Activated T-helper 2 cell treated with anti-CD3 and anti-CD28 coated beads, Interferon-gamma antibody, Interleukin-2, Interleukin-4, amounts not matched to agents 10 μg/mL and 5 μg/mL and 100 μg/mL, durations not matched to agents 14 hours and 24 hours and 36 hours (primary cell): ENCODE measurements at regions of chr1 and their contacts with region 1.

Region 1: GRCh38 chr1:8925406-8925805 is 20.3 kb upstream of the CA6 start:
- DNase-seq: no peak
- H3K4me3 Mint-ChIP-seq: no peak overlapping the region
- H3K27ac Mint-ChIP-seq: no peak overlapping the region
- H3K4me1 Mint-ChIP-seq: peaks cover 9% of the 10 kb centered on the region
- H3K27me3 Mint-ChIP-seq: no peaks in the 10 kb centered on the region

Region 2: DNA sequence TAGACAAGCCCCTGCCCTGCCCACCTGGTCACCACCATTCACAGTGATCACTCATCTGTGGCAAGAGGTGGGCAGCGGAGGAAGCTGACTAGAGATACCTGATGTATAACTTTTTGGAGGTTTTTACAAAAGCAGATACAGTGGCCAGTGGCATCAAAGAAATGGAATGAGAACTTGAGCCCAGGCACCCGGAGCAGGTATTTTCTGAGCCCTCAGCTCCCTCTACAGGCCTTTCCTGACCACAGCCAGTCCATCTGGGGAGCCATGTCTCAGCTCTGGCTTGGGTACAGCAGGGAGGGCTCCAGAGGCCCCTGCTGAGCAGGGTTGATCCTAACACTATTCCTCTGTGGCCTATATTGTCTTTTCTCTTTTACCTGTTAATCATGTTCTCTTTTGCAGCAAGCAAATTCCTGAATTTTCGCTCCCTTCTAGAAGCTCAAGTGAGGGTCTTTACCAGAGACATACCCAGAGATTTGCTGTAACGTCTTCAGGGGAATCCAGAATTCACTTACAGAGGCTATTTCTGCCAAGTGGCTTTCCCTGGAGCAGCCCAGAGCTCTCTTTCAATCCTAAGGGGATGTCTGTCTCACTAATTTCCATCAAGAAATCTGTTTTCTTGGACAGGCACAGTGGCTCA is 176.2 kb after region 1 on chr1:
- intact Hi-C with region 1: loop called (anchors 10 kb)
- DNase-seq: no peak
- H3K4me3 Mint-ChIP-seq: no peak overlapping the region
- H3K27ac Mint-ChIP-seq: no peak overlapping the region
- H3K4me1 Mint-ChIP-seq: peaks cover 2% of the 10 kb centered on the region
- H3K27me3 Mint-ChIP-seq: no peaks in the 10 kb centered on the region